ENCODE measurements at regions of chr11 and their contacts with region 1.

Region 1: DNA sequence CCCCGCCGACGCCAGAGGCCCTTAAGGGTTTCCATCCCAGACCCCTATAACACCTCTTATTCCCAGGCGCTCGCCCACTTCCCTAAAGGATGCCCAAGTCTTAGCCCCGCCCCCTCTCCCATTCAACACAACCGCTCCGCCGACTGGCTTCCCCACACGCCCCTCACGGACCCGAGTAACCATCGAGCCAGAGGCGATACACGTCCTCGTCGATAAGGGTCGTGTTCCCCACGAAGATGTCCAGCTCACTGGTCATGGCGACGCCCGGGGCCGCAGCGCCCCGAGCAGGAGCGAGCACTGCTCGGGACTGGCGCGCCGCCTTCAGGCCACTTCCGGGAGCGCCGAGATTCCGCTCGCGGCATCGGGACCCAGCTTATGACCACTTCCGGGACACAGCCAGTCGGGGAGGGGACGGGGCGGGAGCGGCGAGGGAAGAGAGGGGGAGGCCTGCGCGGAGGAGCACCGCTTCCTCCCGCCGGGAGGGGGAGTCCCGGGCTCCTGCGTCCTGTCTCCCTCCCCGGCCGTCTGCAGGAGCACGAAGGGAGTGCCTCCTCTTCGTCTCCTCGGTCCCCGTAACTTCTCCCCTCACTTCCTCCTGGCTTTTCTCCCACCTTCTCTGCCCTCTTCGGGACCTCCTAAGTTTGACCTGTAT is at the start of gene FIBP:
- DNase-seq: no peak
- ATAC-seq: peak; percentile 62
- H3K4me3 ChIP-seq: peak within 1 kb of the TSS; percentile 88 to 93
- H3K27ac ChIP-seq: peak within 1 kb of the TSS; percentile 98
- H3K4me1 ChIP-seq: peaks cover 51% of the 10 kb centered on the region
- H3K27me3 ChIP-seq: no peaks in the 10 kb centered on the region
- CTCF ChIP-seq: peak; percentile 99
- total RNA-seq, gene FIBP: 105 TPM

Region 2: GRCh38 chr11:64814712-64815187 is 1073.5 kb before region 1 on chr11:
- CTCF ChIA-PET with region 1: no interaction called
- POLR2A ChIA-PET with region 1: no interaction called
- in situ Hi-C with region 1: no loop called
- intact Hi-C with region 1: no loop called
- DNase-seq: no peak
- ATAC-seq: no peak
- H3K4me3 ChIP-seq: no peak overlapping the region
- H3K27ac ChIP-seq: no peak overlapping the region
- H3K4me1 ChIP-seq: no peaks in the 10 kb centered on the region; the same call in 1 of the 2 replicates
- H3K27me3 ChIP-seq: no peaks in the 10 kb centered on the region
- CTCF ChIP-seq: no peak

Region 3: DNA sequence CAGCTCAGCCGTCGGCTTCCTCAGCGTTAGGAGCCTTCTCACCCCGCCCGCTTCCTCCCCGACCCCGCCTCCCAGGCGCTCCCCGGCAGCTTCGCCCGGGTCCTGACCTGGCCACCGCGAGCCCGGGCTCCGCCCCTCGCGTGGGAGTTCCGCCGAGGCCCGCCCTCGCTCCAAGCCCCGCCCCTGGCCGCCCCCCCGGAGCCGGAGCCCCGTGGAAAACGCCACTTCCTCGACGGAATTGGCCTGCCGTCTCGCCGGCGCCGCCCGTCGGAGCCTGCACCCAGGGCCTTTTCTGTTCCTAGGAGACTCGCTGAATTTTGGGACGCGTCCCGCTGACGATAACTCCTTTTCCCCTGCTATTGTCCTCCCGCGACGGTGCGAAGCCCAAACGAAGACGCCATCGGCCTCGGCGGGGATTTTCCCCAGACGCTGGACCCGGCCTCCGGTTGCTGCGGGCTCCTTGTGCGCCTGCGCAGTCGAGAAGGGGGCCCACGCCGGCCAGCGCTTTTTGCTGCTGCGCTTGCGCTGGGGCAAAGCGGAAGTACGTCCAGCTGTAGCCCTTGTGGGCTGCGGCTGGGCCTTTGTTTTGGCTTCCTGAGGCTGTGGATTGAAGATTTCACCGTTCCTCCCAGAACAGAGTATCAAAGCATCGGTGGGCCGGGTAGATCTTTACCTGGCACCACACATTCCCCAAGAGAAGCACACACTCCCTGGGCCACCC is 235.6 kb before region 1 on chr11:
- CTCF ChIA-PET with region 1: interaction called, 12 read pairs
- POLR2A ChIA-PET with region 1: no interaction called
- in situ Hi-C with region 1: no loop called
- intact Hi-C with region 1: no loop called
- DNase-seq: peak; percentile 70
- ATAC-seq: peak; percentile 84
- H3K4me3 ChIP-seq: peak overlapping the region; percentile 48 to 60
- H3K27ac ChIP-seq: peak overlapping the region; percentile 95
- H3K4me1 ChIP-seq: peaks cover 21% of the 10 kb centered on the region
- H3K27me3 ChIP-seq: no peaks in the 10 kb centered on the region
- CTCF ChIP-seq: no peak

Region 4: DNA sequence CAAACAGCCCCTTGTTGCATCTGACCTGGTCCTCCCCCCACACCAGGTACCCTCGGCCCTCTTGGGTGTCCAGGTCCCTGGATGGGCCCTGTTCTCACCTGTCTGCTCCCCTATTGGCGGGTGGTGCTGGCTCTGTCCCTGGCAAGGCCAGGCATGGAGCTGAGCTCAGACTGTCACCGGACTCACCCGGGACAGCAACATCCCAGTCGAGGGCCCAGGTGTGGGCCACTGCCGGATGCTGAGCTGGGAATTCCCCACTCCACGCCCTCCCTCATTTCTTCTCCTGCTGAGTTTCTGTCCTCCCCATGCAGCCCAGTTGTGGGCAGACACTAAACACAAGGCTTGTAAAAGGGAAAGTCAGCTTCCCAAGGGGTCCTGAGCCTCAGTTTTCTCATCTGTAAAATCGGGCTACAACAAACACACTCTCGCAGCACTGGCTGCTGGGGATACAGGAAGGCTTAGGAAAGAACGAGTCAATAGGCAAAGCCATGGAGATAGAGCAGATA is 105.5 kb before region 1 on chr11:
- CTCF ChIA-PET with region 1: no interaction called
- POLR2A ChIA-PET with region 1: no interaction called
- in situ Hi-C with region 1: no loop called
- intact Hi-C with region 1: no loop called
- DNase-seq: no peak
- ATAC-seq: no peak
- H3K4me3 ChIP-seq: no peak overlapping the region
- H3K27ac ChIP-seq: no peak overlapping the region
- H3K4me1 ChIP-seq: peaks cover 12% of the 10 kb centered on the region
- H3K27me3 ChIP-seq: peaks cover under 1% of the 10 kb centered on the region; the same call in 1 of the 2 replicates
- CTCF ChIP-seq: no peak

Region 5: DNA sequence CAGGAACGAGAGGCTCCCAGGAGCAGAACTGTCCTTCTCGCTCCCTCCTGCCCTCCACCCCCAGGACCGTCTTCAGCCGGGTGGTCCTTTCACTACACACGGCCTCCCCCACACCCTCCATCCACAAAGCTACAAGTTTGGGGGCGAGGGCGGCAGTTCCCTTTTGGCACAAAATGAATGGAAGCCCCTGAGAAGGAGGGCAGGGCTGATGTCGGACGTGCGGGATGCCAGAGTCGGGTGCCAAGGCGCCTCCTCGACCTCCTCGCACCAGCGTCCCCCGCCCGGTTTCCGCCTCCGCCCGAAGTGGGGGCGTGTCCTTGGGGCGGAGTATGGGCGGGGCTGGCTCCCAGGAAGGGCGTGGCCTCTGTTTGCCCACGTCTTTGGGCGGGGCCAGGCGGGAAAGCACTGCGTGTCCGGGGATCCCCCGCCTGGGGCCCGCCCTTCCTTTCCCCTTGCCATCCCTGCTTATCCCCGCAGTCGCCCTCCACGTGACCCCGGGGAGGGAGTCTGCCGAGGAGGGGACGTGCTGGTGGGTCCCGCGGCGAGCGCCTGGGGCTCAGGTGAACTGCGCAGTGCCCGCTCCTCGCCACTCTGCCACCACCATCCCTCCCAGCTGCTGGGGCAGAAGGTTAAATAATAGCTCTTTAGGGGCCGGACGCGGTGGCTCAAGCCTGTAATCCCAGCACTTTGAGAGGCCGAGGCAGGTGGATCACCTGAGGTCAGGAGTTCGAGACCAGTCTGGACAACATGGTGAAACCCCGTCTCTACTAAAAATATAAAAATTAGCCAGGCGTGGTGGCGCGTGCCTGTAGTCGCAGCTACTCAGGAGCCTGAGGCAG is 14.8 kb before region 1 on chr11:
- CTCF ChIA-PET with region 1: interaction called, 24 read pairs
- POLR2A ChIA-PET with region 1: interaction called, 10 read pairs
- in situ Hi-C with region 1: no loop called
- intact Hi-C with region 1: no loop called
- DNase-seq: no peak
- ATAC-seq: peak; percentile 83
- H3K4me3 ChIP-seq: peak overlapping the region; percentile 57 to 73
- H3K27ac ChIP-seq: peak overlapping the region; percentile 86
- H3K4me1 ChIP-seq: peaks cover 12% of the 10 kb centered on the region
- H3K27me3 ChIP-seq: no peaks in the 10 kb centered on the region
- CTCF ChIP-seq: no peak

Region 6: DNA sequence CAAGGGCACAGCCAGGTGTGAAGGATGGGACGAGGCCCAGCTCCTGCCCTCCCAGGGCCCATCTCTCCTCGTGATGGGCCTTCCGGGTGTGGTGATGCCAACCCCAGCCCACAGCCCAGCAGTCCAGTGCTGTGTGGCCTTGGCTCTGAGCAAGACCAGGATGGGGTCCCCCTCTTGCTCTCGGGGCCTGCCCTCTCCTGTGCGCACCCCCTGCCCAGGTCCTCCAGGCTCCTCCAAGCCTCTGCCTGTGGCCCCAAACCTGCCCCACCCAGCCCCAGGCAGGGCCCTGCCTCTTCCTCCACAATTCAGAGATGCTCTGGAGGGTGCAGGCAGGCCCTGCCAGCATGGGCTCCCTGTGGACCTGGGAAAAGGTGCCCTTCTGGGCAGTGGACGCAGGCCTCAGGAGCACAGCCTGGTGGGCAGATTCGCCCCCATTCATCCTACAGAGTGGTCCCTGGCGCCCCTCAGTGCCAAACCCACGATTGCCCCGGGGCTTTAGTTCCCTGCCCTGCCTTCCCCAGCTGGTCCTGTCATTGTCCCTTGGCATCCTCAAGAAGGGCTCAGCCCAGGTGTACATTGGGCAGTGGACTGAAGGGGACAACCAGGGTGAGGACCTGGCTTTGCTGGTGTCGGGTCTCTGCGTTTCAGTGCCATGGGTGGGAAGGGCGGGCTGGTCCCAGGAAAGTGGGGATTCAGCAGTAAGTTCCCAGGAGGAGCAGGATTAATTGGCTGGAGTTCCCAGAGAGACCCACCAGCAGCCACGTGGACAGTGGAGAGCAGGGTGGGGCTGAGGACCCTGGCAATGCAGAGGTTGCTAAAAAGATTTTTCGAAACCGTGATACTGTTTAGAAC is 93.9 kb after region 1 on chr11:
- CTCF ChIA-PET with region 1: interaction called, 10 read pairs
- POLR2A ChIA-PET with region 1: interaction called, 10 read pairs
- in situ Hi-C with region 1: no loop called
- intact Hi-C with region 1: no loop called
- DNase-seq: no peak
- ATAC-seq: peak; percentile 24
- H3K4me3 ChIP-seq: no peak overlapping the region
- H3K27ac ChIP-seq: no peak overlapping the region
- H3K4me1 ChIP-seq: no peaks in the 10 kb centered on the region
- H3K27me3 ChIP-seq: no peaks in the 10 kb centered on the region
- CTCF ChIP-seq: no peak

Region 7: GRCh38 chr11:66883016-66883968 is 995.0 kb after region 1 on chr11:
- CTCF ChIA-PET with region 1: no interaction called
- POLR2A ChIA-PET with region 1: no interaction called
- in situ Hi-C with region 1: no loop called
- intact Hi-C with region 1: no loop called
- DNase-seq: peak; percentile 73
- ATAC-seq: peak; percentile 94
- H3K4me3 ChIP-seq: 0 out of 4 replicates have a peak overlapping the region, but pooled peaks have one; percentile 1 to 24
- H3K27ac ChIP-seq: peak overlapping the region; percentile 70
- H3K4me1 ChIP-seq: peaks cover 32% of the 10 kb centered on the region
- H3K27me3 ChIP-seq: no peaks in the 10 kb centered on the region
- CTCF ChIP-seq: peak; percentile 96

Measured in Panc1 (cell line).